GM12878 (cell line): ENCODE measurements at regions of chr4 and their contacts with region 1.

Region 1: GRCh38 chr4:82975792-82976191 is 34.8 kb downstream of the LIN54 start:
- DNase-seq: no peak
- ATAC-seq: no peak
- H3K4me3 ChIP-seq: no peak overlapping the region
- H3K27ac ChIP-seq: no peak overlapping the region
- H3K4me1 ChIP-seq: no peaks in the 10 kb centered on the region
- H3K27me3 ChIP-seq: no peaks in the 10 kb centered on the region
- CTCF ChIP-seq: no peak
- EP300 ChIP-seq: no peak
- POLR2A ChIP-seq: no peak
- RAD21 ChIP-seq: no peak

Region 2: DNA sequence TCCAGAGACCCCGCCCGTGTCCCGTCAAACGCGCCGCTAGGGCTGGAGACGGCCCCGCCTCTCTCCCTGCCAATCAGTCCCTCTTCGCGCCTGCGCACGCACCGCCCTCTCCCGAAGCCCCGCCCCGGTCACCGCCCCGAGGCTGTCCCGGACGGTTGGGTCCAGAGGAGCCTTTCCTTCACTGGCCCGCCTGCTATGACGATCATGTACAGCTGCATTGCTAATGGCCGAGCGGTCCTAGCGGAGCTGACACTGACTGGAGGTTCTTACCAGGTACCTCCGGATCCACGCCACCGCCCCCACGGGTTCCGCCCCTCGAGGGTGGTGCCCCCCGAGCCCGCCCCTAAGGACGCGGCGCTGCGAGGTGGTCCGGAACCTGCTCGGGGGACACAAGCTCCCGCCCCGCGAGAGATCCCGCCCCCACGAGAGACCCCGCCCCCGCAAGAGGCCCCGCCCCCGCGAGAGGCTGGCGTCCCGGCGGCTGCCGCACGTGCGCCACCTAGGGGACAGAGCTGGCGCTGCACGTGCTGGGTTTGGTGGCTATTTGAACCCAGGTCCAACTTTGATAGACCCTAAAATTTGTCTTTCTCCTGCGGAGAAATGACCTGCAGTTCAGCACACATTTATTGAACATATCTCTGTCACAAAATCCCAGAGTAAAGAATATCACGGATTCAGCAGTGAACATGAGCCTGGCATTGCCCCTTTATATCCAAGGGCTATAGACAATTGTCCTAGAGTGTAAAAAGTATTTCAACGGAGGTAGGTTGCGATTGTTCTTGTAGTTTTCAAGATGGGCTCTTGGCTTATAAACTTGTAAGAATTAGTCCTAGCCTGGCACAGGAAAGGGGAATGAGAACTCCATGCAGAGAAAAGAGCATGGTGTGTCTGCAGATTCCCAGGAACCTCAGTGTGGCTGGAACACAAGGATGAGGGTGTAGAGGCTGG is 690.7 kb before region 1 on chr4:
- CTCF ChIA-PET with region 1: no interaction called
- POLR2A ChIA-PET with region 1: no interaction called
- RAD21 ChIA-PET with region 1: no interaction called
- SMC1A ChIA-PET with region 1: no interaction called
- in situ Hi-C with region 1: no loop called
- intact Hi-C with region 1: no loop called
- DNase-seq: peak; percentile 79
- ATAC-seq: peak; percentile 100
- H3K4me3 ChIP-seq: peak overlapping the region; percentile 63
- H3K27ac ChIP-seq: no peak overlapping the region
- H3K4me1 ChIP-seq: no peaks in the 10 kb centered on the region; the same call in 1 of the 2 replicates
- H3K27me3 ChIP-seq: peaks cover 0 to 10% of the 10 kb centered on the region in 2 experiments; a peak in 1 of 4 replicates
- CTCF ChIP-seq: peak; percentile 70 to 90 (median 74)
- EP300 ChIP-seq: no peak
- POLR2A ChIP-seq: no peak
- RAD21 ChIP-seq: peak; percentile 31; the same call in 1 of the 2 replicates

Region 3: DNA sequence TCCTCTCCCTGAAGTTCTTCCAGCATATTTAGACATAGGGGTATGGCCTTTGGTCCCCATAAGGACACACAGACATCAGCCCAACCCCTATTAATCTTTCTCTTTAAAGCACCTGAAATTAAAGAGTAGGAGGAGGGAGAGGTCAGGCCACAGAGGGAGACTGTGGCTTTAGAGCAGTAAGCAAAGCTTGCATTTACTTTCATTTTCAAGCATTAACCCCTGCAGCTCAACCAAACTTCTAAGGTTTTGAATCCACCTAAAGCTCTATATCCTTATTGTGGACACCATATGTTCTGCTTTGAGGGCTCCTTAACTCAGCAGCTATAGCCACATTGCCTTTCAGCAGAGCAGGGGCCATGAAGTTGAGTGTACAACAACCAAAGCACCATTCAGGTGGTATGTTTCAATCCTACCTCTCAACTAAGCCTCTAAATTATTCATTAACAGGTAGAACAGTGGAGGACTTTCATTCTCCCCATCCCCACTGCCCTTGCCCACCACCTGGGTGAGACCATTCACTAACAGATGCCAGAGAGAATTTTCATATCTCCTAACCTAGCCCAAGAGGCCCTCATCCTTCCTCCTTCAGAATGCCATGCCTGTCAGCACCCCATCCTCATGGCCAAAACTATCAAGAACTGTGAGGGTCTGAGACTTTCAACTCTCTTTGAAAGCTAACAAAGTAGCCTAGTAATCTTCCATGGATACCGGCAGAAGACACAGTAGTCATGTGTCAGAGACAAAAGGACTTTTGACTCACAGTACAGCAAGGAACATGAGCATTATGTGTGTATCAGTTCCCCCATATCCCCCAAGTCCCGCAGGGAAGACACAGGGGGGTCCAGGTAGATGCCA is 14.0 kb after region 1 on chr4:
- CTCF ChIA-PET with region 1: interaction called, 3 read pairs
- POLR2A ChIA-PET with region 1: interaction called, 5 read pairs
- RAD21 ChIA-PET with region 1: no interaction called
- SMC1A ChIA-PET with region 1: interaction called, 10 read pairs
- in situ Hi-C with region 1: no loop called
- intact Hi-C with region 1: no loop called
- DNase-seq: peak; percentile 41
- ATAC-seq: peak; percentile 96
- H3K4me3 ChIP-seq: peak overlapping the region; percentile 34; the same call in 1 of the 2 replicates
- H3K27ac ChIP-seq: peak overlapping the region; percentile 35
- H3K4me1 ChIP-seq: peaks cover 5% of the 10 kb centered on the region; the same call in 1 of the 2 replicates
- H3K27me3 ChIP-seq: no peaks in the 10 kb centered on the region
- CTCF ChIP-seq: no peak
- EP300 ChIP-seq: 0 out of 4 replicates have a peak, but pooled peaks of 1 of the 2 experiments have one; percentile 17
- POLR2A ChIP-seq: no peak
- RAD21 ChIP-seq: 0 out of 2 replicates have a peak, but pooled peaks have one; percentile 1

Region 4: GRCh38 chr4:83340692-83341343 is 365.0 kb after region 1 on chr4:
- CTCF ChIA-PET with region 1: no interaction called
- POLR2A ChIA-PET with region 1: no interaction called
- RAD21 ChIA-PET with region 1: no interaction called
- SMC1A ChIA-PET with region 1: no interaction called
- in situ Hi-C with region 1: no loop called
- intact Hi-C with region 1: no loop called
- DNase-seq: no peak
- ATAC-seq: peak; percentile 56
- H3K4me3 ChIP-seq: no peak overlapping the region
- H3K27ac ChIP-seq: no peak overlapping the region
- H3K4me1 ChIP-seq: peaks cover 4% of the 10 kb centered on the region; the same call in 1 of the 2 replicates
- H3K27me3 ChIP-seq: no peaks in the 10 kb centered on the region
- CTCF ChIP-seq: no peak
- EP300 ChIP-seq: no peak
- POLR2A ChIP-seq: no peak
- RAD21 ChIP-seq: no peak